HEK293 (cell line): ENCODE measurements at regions of chr19 and their contacts with region 1.

Region 1: GRCh38 chr19:12938234-12939025 is at the start of gene CALR:
- H3K4me3 ChIP-seq: peak within 1 kb of the TSS; percentile 97
- H3K27ac ChIP-seq: peak within 1 kb of the TSS; percentile 82
- H3K4me1 ChIP-seq: peaks cover 9% of the 10 kb centered on the region
- CTCF ChIP-seq: peak; percentile 90

Region 2: DNA sequence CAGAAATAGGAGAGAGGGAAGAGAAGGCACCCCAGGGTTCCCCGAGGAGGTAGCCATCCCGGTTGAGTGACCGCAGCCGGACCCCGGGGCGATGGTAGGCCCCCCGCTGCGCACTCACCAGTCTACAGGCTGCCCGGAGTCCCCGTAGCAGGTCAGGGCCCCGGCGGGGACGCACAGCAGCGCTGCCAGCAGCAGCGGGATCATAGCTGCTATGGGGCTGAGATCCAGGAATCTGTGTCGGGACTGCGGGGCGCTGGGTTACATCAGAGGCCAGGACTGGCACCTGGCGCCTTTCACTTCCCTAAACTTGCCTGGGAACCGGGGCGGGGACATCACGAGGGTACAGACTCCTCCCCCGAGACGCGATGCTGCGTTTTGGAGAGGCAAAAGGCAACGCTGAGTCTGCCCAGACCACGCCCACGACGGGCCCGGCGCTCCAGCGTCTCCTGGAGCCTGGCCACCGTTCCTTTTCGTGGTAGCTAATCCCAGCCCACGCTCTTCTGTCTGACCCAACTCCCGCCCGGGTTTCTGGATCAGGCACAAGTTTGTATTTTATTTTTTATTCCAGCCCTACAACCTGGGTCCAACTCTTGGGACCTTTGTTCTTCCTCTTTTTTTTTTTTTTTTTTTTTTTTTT is 57.1 kb before region 1 on chr19 and contains the start of gene DNASE2:
- CTCF ChIA-PET with region 1: interaction called, 3 read pairs
- POLR2A ChIA-PET with region 1: interaction called, 10 read pairs
- H3K4me3 ChIP-seq: peak within 1 kb of the TSS; percentile 84
- H3K27ac ChIP-seq: peak within 1 kb of the TSS; percentile 66; the same call in 1 of the 2 replicates
- H3K4me1 ChIP-seq: no peaks in the 10 kb centered on the region
- CTCF ChIP-seq: no peak

Region 3: DNA sequence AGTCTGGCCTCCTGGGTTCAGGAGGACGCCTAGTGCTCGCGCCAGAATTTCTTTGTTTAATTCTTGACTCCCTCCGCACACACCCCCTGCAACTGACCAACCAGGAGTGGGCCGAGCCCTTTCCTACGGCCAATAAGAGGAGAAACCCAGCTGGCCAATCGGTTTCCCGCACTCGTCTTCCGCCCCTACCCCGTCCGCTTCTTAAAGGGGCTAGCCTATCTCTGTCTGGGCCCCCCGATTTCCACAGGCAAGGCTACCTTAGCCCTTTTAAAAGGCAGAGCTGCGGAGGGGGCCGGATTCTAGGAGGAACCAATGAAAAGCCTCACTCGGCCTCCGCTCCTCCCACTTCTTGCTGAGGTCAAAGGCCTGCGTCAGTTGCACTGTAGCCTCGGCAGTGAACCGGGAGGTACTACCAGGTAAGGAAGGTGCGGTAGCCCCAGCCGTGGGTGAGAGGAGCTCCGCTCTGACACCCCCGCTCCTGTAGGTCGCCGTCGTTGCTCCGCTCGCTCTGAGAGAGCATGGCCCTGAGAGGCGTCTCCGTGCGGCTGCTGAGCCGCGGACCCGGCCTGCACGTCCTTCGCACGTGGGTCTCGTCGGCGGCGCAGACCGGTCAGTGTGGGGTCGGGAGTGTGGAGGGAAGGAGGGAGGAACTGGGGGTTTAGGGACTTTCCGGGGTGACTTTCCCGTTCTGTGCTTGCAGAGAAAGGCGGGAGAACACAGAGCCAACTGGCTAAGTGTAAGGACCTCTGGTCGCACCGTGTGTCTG is 47.5 kb before region 1 on chr19 and contains the start of gene GCDH:
- CTCF ChIA-PET with region 1: no interaction called
- POLR2A ChIA-PET with region 1: interaction called, 11 read pairs
- H3K4me3 ChIP-seq: peak within 1 kb of the TSS; percentile 96
- H3K27ac ChIP-seq: no peak within 1 kb of the TSS
- H3K4me1 ChIP-seq: no peaks in the 10 kb centered on the region
- CTCF ChIP-seq: no peak

Region 4: DNA sequence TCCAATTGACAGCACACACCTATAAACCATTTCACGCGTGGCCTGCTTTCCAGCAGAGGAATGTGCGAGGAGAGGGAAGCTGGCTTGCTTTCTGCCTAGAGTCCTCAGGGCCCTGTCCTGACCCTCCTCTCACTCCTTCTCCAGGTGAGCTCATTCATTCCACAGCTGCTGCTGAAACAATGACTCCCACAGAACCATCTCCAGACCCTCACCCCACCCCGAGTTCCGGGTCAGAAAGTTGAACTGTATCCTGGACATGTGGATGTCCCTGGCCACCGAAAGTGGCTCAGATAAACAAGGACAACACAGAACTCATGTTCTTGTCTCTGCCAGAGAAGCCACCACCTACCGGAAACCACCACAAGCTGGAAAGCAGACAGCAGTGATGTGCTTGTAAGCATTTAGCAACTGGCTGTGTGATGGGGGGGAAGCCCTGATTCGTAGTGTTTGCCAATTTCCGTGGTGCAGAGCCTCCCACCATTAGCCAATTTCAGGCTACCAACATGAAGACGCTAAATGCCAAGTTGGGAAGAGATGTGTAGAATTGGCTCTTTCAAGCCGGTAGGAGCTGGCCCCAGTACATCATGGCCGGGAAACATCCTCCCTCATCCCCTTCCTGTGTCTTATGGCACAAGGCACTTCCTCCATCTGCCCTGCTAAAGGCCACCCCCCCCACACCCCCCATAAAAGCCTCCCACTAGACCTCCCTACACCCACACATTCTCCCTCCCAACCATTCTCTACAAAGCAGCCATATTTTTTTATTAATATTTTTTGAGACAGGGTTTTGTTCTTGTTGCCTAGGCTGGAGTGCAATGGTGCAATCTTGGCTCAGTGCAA is 24.4 kb before region 1 on chr19:
- CTCF ChIA-PET with region 1: no interaction called
- POLR2A ChIA-PET with region 1: interaction called, 16 read pairs
- H3K4me3 ChIP-seq: no peak overlapping the region
- H3K27ac ChIP-seq: peak overlapping the region; percentile 48; the same call in 1 of the 2 replicates
- H3K4me1 ChIP-seq: peaks cover 13% of the 10 kb centered on the region
- CTCF ChIP-seq: no peak

Region 5: GRCh38 chr19:12921047-12921446 is 17.4 kb before region 1 on chr19:
- CTCF ChIA-PET with region 1: interaction called, 7 read pairs
- POLR2A ChIA-PET with region 1: interaction called, 16 read pairs
- H3K4me3 ChIP-seq: no peak overlapping the region
- H3K27ac ChIP-seq: no peak overlapping the region
- H3K4me1 ChIP-seq: no peaks in the 10 kb centered on the region
- CTCF ChIP-seq: no peak

Region 6: DNA sequence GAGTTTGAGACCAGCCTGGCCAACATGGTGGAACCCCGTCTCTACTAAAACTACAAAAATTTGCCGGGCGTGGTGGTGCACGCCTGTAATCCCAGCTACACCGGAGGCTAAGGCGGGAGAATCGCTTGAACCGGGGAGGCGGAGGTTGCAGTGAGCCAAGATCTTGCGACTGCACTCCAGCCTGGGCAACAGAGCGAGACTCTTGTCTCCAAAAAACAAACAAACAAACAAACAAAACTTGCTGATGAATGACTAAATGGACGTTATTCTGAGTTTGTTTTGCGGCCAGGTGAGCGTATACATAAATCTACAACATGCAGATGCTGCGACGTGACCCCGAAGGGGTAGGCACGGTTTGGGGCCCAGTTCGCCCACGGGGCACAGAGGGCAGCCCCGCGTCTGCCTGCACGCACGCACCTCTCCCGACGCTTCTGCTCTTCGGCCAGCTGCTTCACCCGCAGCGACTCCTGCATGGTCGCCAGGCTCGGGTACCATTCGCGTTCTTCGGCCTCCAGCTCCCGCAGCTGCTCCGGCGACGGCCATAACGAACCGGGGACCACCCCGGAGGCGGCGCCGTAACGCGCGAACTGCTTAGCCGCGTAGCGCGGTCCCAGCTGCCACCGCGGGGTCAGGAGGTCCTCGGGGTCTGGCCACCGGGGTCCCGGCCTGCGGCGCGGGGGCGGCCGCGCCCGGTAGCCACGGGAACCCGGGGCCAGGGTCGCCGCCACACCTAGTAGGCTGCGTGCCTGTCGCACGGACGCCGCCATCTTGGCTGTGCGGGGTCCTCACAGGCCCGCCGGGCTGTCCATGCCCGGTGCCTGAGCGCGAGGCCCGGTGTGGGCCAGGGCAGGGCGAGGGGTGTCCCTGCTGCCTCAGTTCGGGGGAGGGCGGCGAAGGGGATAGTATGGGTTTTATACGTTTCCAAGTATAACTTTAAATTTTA is 18.3 kb after region 1 on chr19 and contains the start of gene GADD45GIP1:
- CTCF ChIA-PET with region 1: interaction called, 4 read pairs
- POLR2A ChIA-PET with region 1: interaction called, 21 read pairs
- H3K4me3 ChIP-seq: peak within 1 kb of the TSS; percentile 74
- H3K27ac ChIP-seq: peak within 1 kb of the TSS; percentile 63
- H3K4me1 ChIP-seq: peaks cover 10% of the 10 kb centered on the region
- CTCF ChIP-seq: no peak

Region 7: DNA sequence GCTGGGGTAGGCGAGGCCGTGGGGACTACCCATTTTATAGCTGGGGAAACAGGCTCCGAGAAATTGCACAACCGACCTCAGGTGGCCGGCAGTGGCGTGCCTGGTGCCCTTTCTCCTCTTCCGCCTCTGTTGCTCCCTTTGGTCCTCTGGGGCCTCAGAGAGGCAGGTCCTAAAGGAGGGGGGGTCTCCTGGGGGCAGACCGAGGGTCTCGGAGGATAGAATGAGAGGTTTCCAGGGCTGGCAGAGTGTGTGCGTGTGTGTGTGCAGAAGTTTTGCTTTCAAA is 200.4 kb after region 1 on chr19:
- CTCF ChIA-PET with region 1: no interaction called
- POLR2A ChIA-PET with region 1: no interaction called
- H3K4me3 ChIP-seq: no peak overlapping the region
- H3K27ac ChIP-seq: no peak overlapping the region
- H3K4me1 ChIP-seq: no peaks in the 10 kb centered on the region
- CTCF ChIP-seq: no peak